ENCODE measurements at regions of chr17 and their contacts with region 1.

Region 1: DNA sequence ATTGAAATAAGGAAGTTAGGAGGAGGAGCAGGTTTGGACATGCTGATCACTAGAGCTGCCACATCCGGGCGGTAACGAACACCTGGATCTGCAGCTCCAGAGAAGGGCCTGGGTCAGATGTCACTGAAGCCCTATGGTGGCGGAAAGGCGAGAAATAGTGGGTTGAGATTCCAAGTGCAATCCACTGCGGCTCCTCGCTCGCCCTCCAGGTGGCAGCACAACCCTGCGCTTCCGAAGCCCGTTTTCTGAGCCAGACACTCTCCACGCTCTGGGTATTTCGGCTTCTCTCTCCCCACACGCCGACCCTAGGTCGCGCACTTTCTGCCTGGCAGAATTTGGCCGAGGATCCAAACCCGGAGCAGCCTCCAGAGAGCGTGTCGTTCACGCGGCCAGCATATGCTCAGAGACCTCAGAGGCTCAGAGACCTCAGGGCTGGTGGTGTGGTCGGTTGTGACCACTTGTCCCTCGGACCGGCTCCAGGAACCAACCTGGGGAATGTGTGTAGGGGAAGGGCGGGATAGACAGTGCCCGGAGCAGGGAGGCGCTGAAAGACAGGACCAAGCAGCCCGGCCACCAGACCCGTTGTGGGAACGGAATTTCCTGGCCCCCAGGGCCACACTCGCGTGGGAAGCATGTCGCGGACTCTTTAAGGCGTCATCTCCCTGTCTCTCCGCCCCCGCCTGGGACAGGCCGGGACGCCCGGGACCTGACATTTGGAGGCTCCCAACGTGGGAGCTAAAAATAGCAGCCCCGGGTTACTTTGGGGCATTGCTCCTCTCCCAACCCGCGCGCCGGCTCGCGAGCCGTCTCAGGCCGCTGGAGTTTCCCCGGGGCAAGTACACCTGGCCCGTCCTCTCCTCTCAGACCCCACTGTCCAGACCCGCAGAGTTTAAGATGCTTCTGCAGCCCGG is 744 bp upstream of the SLC2A4 start:
- DNase-seq: peak; percentile 84 to 88
- ATAC-seq: peak; percentile 89 to 95 (median 91)
- H3K4me3 ChIP-seq: peak overlapping the region; percentile 23
- H3K4me3 Mint-ChIP-seq: peak overlapping the region; percentile 90
- H3K27ac ChIP-seq: no peak overlapping the region
- H3K27ac Mint-ChIP-seq: peak overlapping the region in 1 of 2 donors; percentile 16
- H3K4me1 ChIP-seq: peaks cover 31% of the 10 kb centered on the region
- H3K4me1 Mint-ChIP-seq: peaks cover 22 to 31% of the 10 kb centered on the region in 2 donors
- H3K27me3 ChIP-seq: peaks cover 29% of the 10 kb centered on the region
- H3K27me3 Mint-ChIP-seq: peaks cover 18 to 24% of the 10 kb centered on the region in 2 donors
- CTCF ChIP-seq: peak; percentile 94

Region 2: DNA sequence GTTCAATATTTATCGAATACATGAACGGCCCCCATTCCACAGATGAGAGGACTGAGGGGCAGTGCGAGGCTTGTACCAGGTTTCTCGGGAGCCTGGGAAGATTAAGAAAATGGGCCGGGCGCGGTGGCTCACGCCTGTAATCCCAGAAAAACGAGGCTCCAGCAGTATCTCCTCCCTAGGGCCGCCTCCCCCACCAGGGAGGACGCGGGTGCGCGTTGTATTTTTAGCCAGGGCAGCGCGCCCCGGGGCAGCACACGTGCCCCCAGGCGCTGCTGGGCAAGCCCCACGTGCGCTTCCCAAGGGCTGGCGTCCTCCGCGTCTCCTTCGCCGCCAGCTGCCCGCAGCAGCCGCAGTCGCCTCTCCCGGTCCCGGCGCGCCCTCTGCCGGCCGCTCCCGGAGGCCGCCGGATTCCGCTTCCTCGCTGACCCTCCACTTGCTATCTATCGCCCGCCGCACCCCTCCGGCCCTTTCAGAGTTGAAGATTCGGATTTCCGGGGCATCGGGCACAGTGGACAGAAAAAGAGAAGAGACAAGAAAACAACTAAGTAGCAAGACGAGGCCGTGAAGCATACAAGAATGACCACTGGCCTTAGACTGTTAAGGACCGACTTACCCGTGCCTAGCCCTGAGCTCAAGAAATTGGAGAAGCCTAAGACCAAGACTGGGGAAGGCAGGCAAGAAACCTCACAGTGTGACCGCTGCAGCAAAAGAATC is 15.6 kb after region 1 on chr17:
- intact Hi-C with region 1: loop called (anchors 1 kb)
- DNase-seq: peak; percentile 71 to 83
- ATAC-seq: peak; percentile 46 to 63 (median 49)
- H3K4me3 ChIP-seq: no peak overlapping the region
- H3K4me3 Mint-ChIP-seq: peak overlapping the region; percentile 95
- H3K27ac ChIP-seq: no peak overlapping the region
- H3K27ac Mint-ChIP-seq: no peak overlapping the region
- H3K4me1 ChIP-seq: peaks cover 28% of the 10 kb centered on the region
- H3K4me1 Mint-ChIP-seq: peaks cover 19 to 24% of the 10 kb centered on the region in 2 donors
- H3K27me3 ChIP-seq: peaks cover 18% of the 10 kb centered on the region
- H3K27me3 Mint-ChIP-seq: peaks cover 7 to 17% of the 10 kb centered on the region in 2 donors
- CTCF ChIP-seq: peak; percentile 92

Region 3: DNA sequence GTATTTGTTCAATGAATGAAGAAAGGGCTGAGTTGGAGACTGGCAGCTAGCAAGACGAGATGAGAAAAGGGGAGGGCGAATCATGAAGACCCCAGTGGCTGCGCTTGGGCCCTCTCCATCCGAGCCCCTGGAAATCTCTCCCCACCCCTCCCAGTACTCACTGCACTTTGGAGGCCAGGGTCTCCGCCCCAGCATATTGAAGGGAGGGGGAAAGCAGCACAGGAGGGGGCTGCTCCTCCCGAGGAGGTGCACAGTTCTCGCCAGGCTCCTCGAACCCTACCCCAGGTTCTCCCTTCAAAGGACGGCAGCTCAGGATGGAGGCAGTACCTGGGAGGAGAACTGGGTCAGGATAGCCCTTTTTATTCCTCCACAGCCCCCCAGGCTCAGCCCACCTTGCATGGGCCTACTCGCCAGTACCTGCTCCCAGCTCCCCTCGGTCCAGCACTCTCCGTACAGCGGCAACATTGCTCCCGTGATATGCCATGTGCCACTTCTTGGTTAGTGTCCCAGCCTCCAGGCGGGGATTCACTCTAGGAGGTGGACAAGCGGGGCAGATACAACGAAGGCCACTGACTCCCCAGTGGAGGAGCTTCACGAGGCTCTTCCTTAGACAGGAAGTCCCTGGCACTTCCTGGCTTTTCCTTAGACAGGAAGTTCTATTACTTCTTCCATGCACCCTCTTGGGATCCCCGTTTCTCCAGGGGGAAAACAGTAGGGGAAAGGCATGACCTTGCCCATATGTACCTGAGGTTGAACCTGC is 36.5 kb after region 1 on chr17:
- intact Hi-C with region 1: no loop called
- DNase-seq: no peak
- ATAC-seq: no peak
- H3K4me3 ChIP-seq: no peak overlapping the region
- H3K4me3 Mint-ChIP-seq: peak overlapping the region; percentile 49
- H3K27ac ChIP-seq: no peak overlapping the region
- H3K27ac Mint-ChIP-seq: peak overlapping the region; percentile 56 to 99
- H3K4me1 ChIP-seq: peaks cover 37% of the 10 kb centered on the region
- H3K4me1 Mint-ChIP-seq: peaks cover 17 to 36% of the 10 kb centered on the region in 2 donors
- H3K27me3 ChIP-seq: no peaks in the 10 kb centered on the region
- H3K27me3 Mint-ChIP-seq: no peaks in the 10 kb centered on the region
- CTCF ChIP-seq: no peak

Region 4: GRCh38 chr17:7329374-7329996 is 48.7 kb after region 1 on chr17:
- intact Hi-C with region 1: loop called (anchors 2 kb)
- DNase-seq: peak; percentile 91 to 99
- ATAC-seq: peak; percentile 73 to 90 (median 76)
- H3K4me3 ChIP-seq: peak overlapping the region; percentile 90
- H3K4me3 Mint-ChIP-seq: peak overlapping the region; percentile 96
- H3K27ac ChIP-seq: peak overlapping the region; percentile 91
- H3K27ac Mint-ChIP-seq: peak overlapping the region; percentile 89 to 97
- H3K4me1 ChIP-seq: peaks cover 30% of the 10 kb centered on the region
- H3K4me1 Mint-ChIP-seq: peaks cover 21 to 40% of the 10 kb centered on the region in 2 donors
- H3K27me3 ChIP-seq: no peaks in the 10 kb centered on the region
- H3K27me3 Mint-ChIP-seq: no peaks in the 10 kb centered on the region
- CTCF ChIP-seq: no peak

Region 5: DNA sequence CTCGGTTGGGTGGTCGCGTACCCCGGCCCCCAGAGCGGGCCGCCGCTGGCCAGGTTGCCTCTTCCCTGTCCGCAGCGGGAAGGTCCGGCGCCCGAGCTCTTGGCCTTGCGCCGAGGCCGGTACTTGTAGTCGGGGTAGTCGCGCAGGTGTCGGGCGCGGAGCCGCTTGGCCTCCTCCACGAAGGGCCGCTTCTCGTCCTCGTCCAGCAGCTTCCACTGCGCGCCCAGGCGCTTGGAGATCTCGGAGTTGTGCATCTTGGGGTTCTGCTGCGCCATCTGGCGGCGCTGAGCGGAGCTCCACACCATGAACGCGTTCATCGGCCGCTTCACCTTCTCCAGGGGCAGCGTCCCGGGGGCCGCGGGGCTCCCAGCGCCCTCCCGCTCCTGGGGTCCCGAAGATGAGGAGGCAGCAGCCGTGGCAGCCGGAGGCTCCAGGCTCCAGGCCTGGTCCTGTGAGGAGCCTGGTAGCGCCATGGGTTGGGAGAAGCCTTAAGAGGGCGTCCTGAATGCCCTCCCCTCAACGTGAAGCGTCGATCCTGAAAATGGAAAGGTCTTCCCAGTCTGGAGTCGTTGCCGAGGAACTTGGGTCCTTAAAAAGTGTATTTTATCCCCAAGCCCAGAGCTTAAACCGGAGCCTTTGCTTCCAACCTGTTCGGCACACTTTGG is 308.6 kb after region 1 on chr17:
- intact Hi-C with region 1: loop called (anchors 1 kb)
- DNase-seq: peak; percentile 67 to 86
- ATAC-seq: peak; percentile 83 to 96 (median 87)
- H3K4me3 ChIP-seq: no peak overlapping the region
- H3K4me3 Mint-ChIP-seq: no peak overlapping the region
- H3K27ac ChIP-seq: no peak overlapping the region
- H3K27ac Mint-ChIP-seq: no peak overlapping the region
- H3K4me1 ChIP-seq: peaks cover 16% of the 10 kb centered on the region
- H3K4me1 Mint-ChIP-seq: peaks cover 1 to 8% of the 10 kb centered on the region in 2 donors
- H3K27me3 ChIP-seq: no peaks in the 10 kb centered on the region
- H3K27me3 Mint-ChIP-seq: no peaks in the 10 kb centered on the region
- CTCF ChIP-seq: peak; percentile 68

Measured in natural killer cell (primary cell).